Sciatic nerve (tissue), 2 donors: ENCODE measurements at regions of chr6 and their contacts with region 1.

Region 1: GRCh38 chr6:15392182-15392581 is 146.3 kb downstream of the JARID2 start:
- DNase-seq: no peak
- ATAC-seq: no peak

Region 2: DNA sequence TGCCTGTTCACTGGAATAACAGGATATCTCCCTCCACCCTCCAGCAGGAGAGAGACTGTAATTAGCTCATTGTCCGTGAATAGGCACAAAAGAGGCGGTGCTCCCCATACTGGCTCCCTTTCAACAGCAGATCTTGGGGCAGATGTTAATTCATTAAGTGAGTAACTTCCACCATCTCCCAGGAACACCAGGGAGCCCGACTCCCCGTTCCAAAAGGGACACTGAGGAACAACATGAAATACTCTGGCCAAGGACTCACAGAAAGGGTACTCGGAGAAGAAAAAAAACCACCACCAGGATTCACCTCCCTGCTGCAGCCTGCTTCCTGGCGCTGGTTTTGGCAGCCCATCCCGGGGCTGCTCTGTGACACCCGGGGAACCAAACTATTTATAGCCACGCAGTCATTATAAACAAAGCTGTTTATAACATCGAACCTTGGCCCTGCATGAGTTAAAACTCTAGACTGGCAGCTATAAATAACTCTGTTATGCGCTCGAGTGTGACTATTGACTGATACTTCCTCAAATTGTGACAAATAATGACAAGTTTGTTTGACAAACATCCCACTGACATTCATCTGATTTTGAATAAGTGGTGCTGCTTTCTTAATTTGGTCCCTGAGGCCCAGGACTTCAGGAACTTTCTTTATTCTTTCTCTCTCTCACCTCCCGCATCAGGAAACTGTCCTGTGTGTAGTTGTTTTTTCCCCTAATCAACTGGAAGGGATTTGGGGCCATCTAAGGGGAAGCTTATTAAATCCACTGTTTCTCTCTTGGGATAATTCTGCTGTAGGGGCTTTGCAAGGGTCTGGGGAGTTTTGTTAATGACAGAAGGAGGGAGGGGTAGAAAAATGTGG is 753.0 kb before region 1 on chr6:
- intact Hi-C with region 1: no loop called
- DNase-seq: no peak
- ATAC-seq: peak; percentile 72

Region 3: DNA sequence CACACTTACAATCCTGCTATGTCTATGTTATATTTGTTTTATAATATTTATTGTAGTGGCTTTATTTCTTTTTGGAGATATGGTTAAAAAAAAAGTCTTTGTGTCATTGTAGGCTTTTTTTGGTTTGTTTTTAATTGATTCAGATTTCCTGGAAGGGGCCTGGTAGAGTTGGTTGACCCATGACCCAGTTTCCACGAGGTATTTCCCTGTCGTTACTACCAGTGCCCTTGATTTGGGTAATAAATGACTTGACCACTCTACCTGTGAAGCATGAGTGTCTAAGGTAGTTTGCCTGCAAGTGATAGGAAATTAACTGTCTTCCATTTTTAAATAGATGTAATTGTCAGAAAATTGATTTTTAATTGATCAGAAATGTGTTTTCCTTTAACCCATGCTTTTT is 25.3 kb before region 1 on chr6:
- intact Hi-C with region 1: loop called (anchors 1 kb)
- DNase-seq: no peak
- ATAC-seq: no peak